Activated CD4-positive, alpha-beta T cell treated with anti-CD3 and anti-CD28 coated beads for 36 hours (primary cell): ENCODE measurements at regions of chr5 and their contacts with region 1.

Region 1: GRCh38 chr5:82364497-82364896 is 86.3 kb upstream of the RPS23 start:
- DNase-seq: no peak
- ATAC-seq: no peak
- H3K4me3 Mint-ChIP-seq: no peak overlapping the region
- H3K27ac Mint-ChIP-seq: no peak overlapping the region
- H3K4me1 Mint-ChIP-seq: peaks cover 22% of the 10 kb centered on the region
- H3K27me3 Mint-ChIP-seq: peaks cover 5% of the 10 kb centered on the region

Region 2: GRCh38 chr5:82115858-82116257 is 248.6 kb before region 1 on chr5:
- CTCF ChIA-PET with region 1: no interaction called
- POLR2A ChIA-PET with region 1: no interaction called
- intact Hi-C with region 1: no loop called
- DNase-seq: no peak
- ATAC-seq: no peak
- H3K4me3 Mint-ChIP-seq: no peak overlapping the region
- H3K27ac Mint-ChIP-seq: no peak overlapping the region
- H3K4me1 Mint-ChIP-seq: peaks cover 6% of the 10 kb centered on the region
- H3K27me3 Mint-ChIP-seq: no peaks in the 10 kb centered on the region

Region 3: DNA sequence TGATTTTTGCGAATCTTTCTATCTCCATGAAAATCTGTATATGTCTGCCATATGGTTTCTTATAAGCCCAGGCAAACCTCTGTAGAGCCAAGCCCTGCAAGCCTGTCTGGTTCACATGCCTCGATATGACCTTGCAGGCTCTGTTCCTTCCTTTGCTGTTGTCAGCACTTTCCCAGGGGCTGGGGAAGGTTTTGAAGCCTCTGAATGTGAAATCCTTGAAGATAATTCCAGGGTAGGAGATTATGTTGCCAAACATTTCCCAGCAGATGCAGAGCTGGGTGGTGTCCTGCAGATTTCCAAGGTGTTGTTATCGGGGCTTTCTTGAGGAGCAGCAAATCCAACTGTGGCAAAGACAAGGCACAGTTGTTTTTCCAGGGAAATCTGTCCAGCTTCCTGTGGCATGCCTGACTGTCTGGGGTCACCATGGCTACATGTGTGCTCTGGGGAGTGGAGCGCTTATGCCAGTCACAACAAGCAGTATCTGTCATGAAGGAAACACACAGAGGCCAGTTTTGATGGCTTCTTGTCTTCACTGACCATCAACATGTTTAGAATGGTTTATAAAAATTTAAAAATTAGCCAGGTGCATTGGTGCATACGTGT is 25.6 kb before region 1 on chr5:
- CTCF ChIA-PET with region 1: no interaction called
- POLR2A ChIA-PET with region 1: no interaction called
- intact Hi-C with region 1: no loop called
- DNase-seq: no peak
- ATAC-seq: no peak
- H3K4me3 Mint-ChIP-seq: no peak overlapping the region
- H3K27ac Mint-ChIP-seq: no peak overlapping the region
- H3K4me1 Mint-ChIP-seq: no peaks in the 10 kb centered on the region
- H3K27me3 Mint-ChIP-seq: peaks cover 21% of the 10 kb centered on the region

Region 4: DNA sequence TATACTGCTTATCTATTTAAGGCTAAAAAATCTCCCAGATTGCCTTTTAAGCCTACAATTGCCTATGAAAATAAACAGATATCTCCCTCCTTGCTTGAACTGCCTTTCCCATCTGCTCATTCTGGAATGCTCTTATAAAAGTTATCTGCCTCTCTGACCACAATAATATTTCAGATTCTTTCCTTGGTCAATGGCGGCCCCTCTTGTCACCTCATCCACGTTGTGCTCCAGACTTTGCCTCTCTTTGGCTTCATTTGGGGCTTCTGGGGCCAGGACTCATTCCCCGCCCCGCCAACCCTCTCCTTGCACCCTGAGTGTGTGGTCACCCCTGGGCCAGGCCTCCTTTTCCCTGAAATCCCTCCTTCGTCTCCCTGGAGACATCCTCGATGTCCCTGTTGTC is 23.7 kb after region 1 on chr5:
- CTCF ChIA-PET with region 1: no interaction called
- POLR2A ChIA-PET with region 1: interaction called, 3 read pairs
- intact Hi-C with region 1: loop called in 1 of 2 experiments (anchors 2 kb)
- DNase-seq: no peak
- ATAC-seq: no peak
- H3K4me3 Mint-ChIP-seq: no peak overlapping the region
- H3K27ac Mint-ChIP-seq: no peak overlapping the region
- H3K4me1 Mint-ChIP-seq: peaks cover 11% of the 10 kb centered on the region
- H3K27me3 Mint-ChIP-seq: peaks cover 7% of the 10 kb centered on the region

Region 5: GRCh38 chr5:82526540-82526939 is 162.0 kb after region 1 on chr5:
- CTCF ChIA-PET with region 1: no interaction called
- POLR2A ChIA-PET with region 1: no interaction called
- intact Hi-C with region 1: loop called in 1 of 2 experiments (anchors 5 kb)
- DNase-seq: no peak
- ATAC-seq: peak; percentile 58
- H3K4me3 Mint-ChIP-seq: no peak overlapping the region
- H3K27ac Mint-ChIP-seq: no peak overlapping the region
- H3K4me1 Mint-ChIP-seq: peaks cover 6% of the 10 kb centered on the region
- H3K27me3 Mint-ChIP-seq: peaks cover 2% of the 10 kb centered on the region